Left lung (tissue), 14 donors: ENCODE measurements at regions of chr11 and their contacts with region 1.

Region 1: DNA sequence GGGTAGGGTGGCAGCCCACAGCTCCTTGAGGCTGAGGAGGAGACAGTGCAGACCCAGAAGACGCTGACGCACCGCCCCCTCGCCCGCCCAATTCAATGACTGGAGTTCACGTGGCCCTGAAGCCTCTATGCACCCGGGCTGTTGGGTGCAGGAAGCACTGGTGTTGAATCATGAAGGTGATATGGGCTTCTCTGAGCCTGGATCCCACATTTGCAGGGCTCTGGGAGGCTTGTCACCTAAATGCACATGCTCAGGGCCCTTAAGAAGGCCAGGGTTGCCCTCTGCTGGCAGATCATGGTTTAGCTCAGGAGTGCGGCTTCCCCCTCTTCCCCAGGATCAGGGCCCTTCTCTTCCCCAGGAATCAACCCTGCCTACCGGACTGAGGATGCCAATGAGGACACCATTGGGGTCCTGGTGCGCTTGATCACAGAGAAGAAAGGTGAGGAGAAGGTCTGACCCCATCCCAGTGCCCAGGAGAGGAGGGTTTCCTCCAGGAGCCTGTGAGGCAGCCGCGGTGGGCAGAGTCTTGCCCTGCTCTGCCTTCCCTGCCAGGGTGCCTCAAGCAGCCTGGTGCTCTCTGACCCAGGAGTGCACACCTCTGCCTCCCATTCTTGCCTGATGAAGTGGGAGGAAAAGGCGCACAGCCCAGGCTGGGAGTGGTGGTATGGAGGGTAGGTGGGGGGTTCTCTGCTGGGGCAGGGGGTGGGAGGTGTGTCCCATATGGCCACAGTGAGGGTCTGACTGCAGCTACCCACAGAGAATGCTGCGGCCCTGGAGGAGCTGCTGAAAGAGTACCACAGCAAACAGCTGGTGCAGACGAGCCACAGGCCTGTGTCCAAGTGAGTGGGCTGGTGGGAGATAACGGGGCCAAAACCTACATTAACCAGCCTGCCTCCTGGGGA is 17.5 kb downstream of the RELT start:
- DNase-seq: peak in 3 of 4 donors; percentile 48 to 80 (median 74)
- ATAC-seq: peak; percentile 73
- H3K4me3 ChIP-seq: no peak overlapping the region
- H3K27ac ChIP-seq: no peak overlapping the region
- H3K4me1 ChIP-seq: peaks cover 0 to 34% of the 10 kb centered on the region in 2 donors
- H3K27me3 ChIP-seq: no peaks in the 10 kb centered on the region
- CTCF ChIP-seq: peak; percentile 46 to 79

Region 2: DNA sequence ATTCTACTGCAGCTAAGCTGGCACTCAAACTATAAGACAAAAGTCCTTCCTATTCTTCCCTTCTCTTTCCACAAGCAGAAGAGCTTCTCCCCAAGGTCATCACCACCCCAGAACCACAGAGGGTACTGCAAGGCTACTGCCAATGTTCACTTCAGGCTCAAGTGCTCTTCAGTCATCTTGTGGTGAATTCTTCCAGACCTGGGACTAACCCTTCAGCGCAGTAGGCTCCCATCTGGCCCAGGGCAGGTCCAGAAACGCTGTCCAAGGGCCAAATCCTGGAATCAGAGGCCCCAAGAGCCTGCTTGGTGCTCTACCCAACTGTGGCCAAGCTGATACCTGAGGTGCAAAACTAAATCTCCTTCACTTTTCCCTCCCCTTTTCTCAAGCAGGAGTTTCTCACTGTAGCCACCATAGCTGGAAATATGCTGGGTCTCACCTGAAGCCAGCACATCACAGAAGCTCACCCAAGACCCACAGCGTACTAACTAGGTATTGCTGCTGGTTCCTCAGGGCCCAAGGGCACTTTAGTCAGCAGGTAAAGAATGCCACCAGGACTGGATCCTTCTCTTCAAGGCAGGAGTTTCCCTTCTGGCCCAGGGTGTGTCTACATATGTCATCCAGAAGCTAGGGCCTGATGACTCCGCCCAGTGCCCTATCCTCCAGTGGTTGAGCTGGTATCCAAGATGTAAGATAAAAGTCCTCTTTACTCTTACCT is 279.5 kb before region 1 on chr11:
- intact Hi-C with region 1: no loop called
- DNase-seq: no peak
- ATAC-seq: peak; percentile 64
- H3K4me3 ChIP-seq: no peak overlapping the region
- H3K27ac ChIP-seq: no peak overlapping the region
- H3K4me1 ChIP-seq: peaks cover 0 to 14% of the 10 kb centered on the region in 2 donors
- H3K27me3 ChIP-seq: no peaks in the 10 kb centered on the region
- CTCF ChIP-seq: no peak

Region 3: GRCh38 chr11:73350908-73351636 is 42.7 kb before region 1 on chr11:
- intact Hi-C with region 1: loop called in 1 of 2 experiments (anchors 5 kb)
- DNase-seq: peak in 3 of 4 donors; percentile 61 to 82 (median 82)
- ATAC-seq: peak; percentile 89
- H3K4me3 ChIP-seq: no peak overlapping the region
- H3K27ac ChIP-seq: no peak overlapping the region
- H3K4me1 ChIP-seq: peaks cover 0 to 15% of the 10 kb centered on the region in 2 donors
- H3K27me3 ChIP-seq: no peaks in the 10 kb centered on the region
- CTCF ChIP-seq: peak; percentile 91 to 96

Region 4: DNA sequence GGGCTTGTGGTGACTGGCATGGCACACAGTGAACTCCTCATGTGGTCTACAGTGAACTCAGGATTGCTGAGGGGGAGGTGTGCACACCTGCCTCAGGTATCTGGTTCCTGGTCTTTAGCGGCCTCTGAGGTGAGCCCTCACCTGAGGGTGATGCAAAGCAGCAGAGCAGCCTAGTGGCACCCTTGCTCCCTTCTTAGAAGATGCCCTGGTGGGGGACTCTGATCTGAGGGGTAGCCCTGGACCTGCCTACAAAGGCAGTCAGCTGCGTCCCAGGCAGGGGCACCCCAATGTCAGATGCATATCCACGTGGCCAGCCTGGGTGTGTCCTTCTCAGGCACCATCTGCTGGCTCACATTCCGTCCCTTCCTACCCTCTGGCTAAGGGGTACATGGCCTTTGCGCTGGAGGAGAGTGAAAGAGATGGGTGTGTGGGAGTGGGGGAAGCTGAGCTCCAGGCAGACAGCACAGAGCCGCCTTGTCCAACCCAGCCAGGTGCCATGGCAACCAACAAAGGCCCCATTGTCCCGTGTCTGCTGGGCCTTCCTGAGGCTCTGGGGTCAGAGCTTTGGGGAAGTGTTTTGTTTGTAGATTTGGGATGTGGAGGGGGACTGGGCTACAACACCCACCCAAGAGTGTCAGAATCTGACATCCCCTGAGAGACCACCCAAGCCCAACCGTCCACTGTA is 258.5 kb after region 1 on chr11:
- intact Hi-C with region 1: loop called in 1 of 2 experiments (anchors 10 kb)
- DNase-seq: peak in 1 of 4 donors; percentile 24
- ATAC-seq: no peak
- H3K4me3 ChIP-seq: no peak overlapping the region
- H3K27ac ChIP-seq: no peak overlapping the region
- H3K4me1 ChIP-seq: peaks cover 0 to 5% of the 10 kb centered on the region in 2 donors
- H3K27me3 ChIP-seq: no peaks in the 10 kb centered on the region
- CTCF ChIP-seq: no peak

Region 5: DNA sequence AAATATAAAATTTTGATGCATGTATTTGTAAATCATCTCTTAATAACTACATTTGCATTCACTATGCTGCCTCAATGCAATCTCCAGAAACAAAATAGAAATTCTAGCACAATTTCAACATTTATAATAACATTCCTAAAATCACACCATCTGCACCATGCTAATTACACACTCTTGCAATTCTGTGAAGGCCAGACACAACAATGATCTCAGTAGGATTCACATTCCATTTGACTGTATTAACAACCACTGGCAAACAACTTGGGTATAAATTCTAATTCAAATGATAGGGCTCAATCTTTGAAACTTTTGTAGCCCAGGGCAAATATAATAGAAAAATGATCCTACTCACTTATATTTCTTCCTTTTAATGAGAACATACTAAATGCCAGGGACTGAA is 341.3 kb after region 1 on chr11:
- intact Hi-C with region 1: no loop called
- DNase-seq: no peak
- ATAC-seq: no peak
- H3K4me3 ChIP-seq: no peak overlapping the region
- H3K27ac ChIP-seq: no peak overlapping the region
- H3K4me1 ChIP-seq: no peaks in the 10 kb centered on the region
- H3K27me3 ChIP-seq: no peaks in the 10 kb centered on the region
- CTCF ChIP-seq: no peak